ENCODE measurements at regions of chr1 and their contacts with region 1.

Region 1: GRCh38 chr1:182781841-182782586 is 7.6 kb upstream of the NPL start:
- DNase-seq: peak; percentile 45 to 66
- H3K4me3 ChIP-seq: no peak overlapping the region
- H3K27ac ChIP-seq: no peak overlapping the region
- H3K4me1 ChIP-seq: no peaks in the 10 kb centered on the region
- H3K27me3 ChIP-seq: no peaks in the 10 kb centered on the region
- CTCF ChIP-seq: peak; percentile 83

Region 2: GRCh38 chr1:181479137-181479745 is 1302.8 kb before region 1 on chr1:
- CTCF ChIA-PET with region 1: no interaction called
- POLR2A ChIA-PET with region 1: no interaction called
- intact Hi-C with region 1: loop called (anchors 5 kb)
- DNase-seq: peak in 1 of 2 experiments; percentile 24
- H3K4me3 ChIP-seq: no peak overlapping the region
- H3K27ac ChIP-seq: no peak overlapping the region
- H3K4me1 ChIP-seq: no peaks in the 10 kb centered on the region
- H3K27me3 ChIP-seq: peaks cover 38% of the 10 kb centered on the region
- CTCF ChIP-seq: peak; percentile 71

Region 3: DNA sequence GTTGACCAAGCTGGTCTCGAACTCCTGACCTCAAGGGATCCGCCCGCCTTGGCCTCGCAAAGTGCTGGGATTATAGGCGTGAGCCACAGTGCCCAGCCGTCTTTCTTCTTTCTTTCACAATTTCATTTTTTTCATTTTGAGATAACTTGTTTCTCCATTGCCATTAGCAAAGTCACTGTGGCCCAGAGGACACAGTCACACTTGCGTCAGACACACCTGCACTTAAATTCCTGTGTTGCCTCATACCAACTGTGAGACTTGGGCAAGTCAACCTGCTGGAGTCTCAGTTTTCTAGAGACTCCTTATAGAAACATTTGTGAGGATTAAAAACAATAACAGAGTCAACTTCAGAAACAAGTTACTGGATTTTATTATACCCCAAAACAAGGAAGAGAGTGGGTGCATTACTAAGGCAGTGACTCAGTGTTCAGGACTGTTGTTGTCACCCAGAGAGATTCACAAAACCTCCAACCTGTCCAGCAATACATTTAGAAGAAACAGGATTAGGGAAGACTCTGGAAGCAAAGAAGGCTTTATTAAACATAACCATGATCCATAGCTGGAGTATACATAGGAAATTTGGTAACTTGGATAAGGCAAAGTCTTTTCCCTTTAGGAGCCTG is 384.1 kb before region 1 on chr1:
- CTCF ChIA-PET with region 1: no interaction called
- POLR2A ChIA-PET with region 1: no interaction called
- intact Hi-C with region 1: loop called (anchors 2 kb)
- DNase-seq: peak; percentile 58 to 95
- H3K4me3 ChIP-seq: no peak overlapping the region
- H3K27ac ChIP-seq: peak overlapping the region; percentile 89
- H3K4me1 ChIP-seq: peaks cover 25% of the 10 kb centered on the region
- H3K27me3 ChIP-seq: no peaks in the 10 kb centered on the region
- CTCF ChIP-seq: no peak

Region 4: DNA sequence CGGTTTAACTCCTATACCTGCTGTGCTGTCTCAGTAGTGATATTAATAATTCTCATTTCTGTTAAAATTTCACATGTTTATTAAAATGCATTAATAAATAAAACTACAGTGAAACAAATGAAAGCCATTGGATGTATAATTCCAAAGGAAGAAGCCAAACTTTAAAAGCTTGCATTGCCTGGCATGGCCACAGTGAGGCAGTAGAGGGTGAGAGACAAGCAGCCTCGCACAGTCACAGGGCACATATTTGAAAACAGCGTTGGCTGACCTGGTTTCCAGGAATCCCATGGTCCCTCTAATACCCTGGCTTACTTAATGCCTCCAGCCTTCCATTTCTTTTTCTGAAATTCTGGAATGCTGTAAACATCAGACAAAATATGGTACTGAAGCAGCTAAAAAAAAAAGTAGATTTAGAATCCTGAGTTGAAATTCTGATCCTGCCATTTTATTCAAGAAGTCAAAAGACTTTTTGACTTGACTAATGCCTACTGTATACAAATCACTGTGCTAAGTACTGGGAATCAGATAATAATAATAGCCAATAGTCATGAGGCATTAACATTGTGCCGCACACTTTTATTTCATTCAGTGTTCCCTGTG is 186.3 kb before region 1 on chr1:
- CTCF ChIA-PET with region 1: interaction called, 22 read pairs
- POLR2A ChIA-PET with region 1: no interaction called
- intact Hi-C with region 1: no loop called
- DNase-seq: peak; percentile 40 to 45
- H3K4me3 ChIP-seq: no peak overlapping the region
- H3K27ac ChIP-seq: no peak overlapping the region
- H3K4me1 ChIP-seq: no peaks in the 10 kb centered on the region
- H3K27me3 ChIP-seq: no peaks in the 10 kb centered on the region
- CTCF ChIP-seq: peak; percentile 88

Region 5: GRCh38 chr1:182839209-182840065 is 57.4 kb after region 1 on chr1 and contains the start of gene DHX9:
- CTCF ChIA-PET with region 1: no interaction called
- POLR2A ChIA-PET with region 1: no interaction called
- intact Hi-C with region 1: loop called (anchors 2 kb)
- DNase-seq: peak; percentile 74 to 93
- H3K4me3 ChIP-seq: peak within 1 kb of the TSS; percentile 96
- H3K27ac ChIP-seq: peak within 1 kb of the TSS; percentile 68
- H3K4me1 ChIP-seq: peaks cover 24% of the 10 kb centered on the region
- H3K27me3 ChIP-seq: no peaks in the 10 kb centered on the region
- CTCF ChIP-seq: no peak
- total RNA-seq, gene DHX9: 101 and 131 TPM in 2 replicates

Region 6: DNA sequence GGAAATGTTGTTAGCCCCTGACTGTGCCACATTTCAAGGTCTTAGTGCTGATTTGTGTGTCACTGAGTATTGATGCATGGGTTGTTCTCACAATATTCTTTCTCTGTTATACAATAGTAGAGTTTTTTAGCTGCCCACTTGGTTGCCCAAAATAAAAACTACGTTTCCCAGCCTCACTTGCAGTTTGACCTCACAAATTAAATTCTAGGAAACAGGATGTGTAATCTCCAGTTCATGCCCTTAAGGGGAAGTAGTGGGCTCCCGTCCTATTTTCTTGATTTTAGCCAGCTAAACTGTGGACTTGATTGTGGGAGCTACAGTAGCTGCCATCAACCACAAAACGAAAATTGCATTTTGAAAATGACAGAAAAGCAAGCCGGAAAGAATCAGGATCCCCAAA is 213.9 kb after region 1 on chr1:
- CTCF ChIA-PET with region 1: no interaction called
- POLR2A ChIA-PET with region 1: no interaction called
- intact Hi-C with region 1: no loop called
- DNase-seq: no peak
- H3K4me3 ChIP-seq: no peak overlapping the region
- H3K27ac ChIP-seq: no peak overlapping the region
- H3K4me1 ChIP-seq: no peaks in the 10 kb centered on the region
- H3K27me3 ChIP-seq: no peaks in the 10 kb centered on the region
- CTCF ChIP-seq: no peak